AG04449 (cell line): ENCODE measurements at regions of chr15 and their contacts with region 1.

Region 1: GRCh38 chr15:45126535-45127158 is 3.0 kb downstream of the DUOXA1 start:
- DNase-seq: no peak
- H3K4me3 ChIP-seq: no peak overlapping the region
- CTCF ChIP-seq: peak; percentile 34

Region 2: GRCh38 chr15:45112586-45113379 is 13.9 kb before region 1 on chr15:
- CTCF ChIA-PET with region 1: interaction called, 129 read pairs
- POLR2A ChIA-PET with region 1: no interaction called
- DNase-seq: no peak
- H3K4me3 ChIP-seq: no peak overlapping the region
- CTCF ChIP-seq: no peak

Region 3: DNA sequence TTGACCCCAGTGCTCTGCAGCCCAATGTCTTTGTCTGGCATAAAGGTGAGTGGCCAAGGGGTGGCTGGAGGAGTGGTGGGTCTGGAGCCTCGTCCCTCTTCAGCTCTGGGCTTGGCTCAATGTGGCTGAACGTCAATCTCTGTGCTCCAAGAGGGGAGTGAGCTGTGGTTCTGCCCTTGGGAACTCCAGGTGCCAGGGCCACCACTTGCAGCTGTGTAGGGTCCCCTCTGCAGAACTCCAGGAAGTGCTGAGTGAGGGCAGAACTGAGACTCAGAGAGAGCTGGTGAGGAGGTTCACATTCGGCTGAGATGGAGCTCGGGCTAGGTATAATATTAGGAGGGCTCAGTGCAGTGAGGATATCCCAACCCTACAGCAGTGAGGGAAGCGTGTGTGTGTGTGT is 14.7 kb after region 1 on chr15:
- CTCF ChIA-PET with region 1: interaction called, 129 read pairs
- POLR2A ChIA-PET with region 1: no interaction called
- DNase-seq: no peak
- H3K4me3 ChIP-seq: no peak overlapping the region
- CTCF ChIP-seq: no peak

Region 4: DNA sequence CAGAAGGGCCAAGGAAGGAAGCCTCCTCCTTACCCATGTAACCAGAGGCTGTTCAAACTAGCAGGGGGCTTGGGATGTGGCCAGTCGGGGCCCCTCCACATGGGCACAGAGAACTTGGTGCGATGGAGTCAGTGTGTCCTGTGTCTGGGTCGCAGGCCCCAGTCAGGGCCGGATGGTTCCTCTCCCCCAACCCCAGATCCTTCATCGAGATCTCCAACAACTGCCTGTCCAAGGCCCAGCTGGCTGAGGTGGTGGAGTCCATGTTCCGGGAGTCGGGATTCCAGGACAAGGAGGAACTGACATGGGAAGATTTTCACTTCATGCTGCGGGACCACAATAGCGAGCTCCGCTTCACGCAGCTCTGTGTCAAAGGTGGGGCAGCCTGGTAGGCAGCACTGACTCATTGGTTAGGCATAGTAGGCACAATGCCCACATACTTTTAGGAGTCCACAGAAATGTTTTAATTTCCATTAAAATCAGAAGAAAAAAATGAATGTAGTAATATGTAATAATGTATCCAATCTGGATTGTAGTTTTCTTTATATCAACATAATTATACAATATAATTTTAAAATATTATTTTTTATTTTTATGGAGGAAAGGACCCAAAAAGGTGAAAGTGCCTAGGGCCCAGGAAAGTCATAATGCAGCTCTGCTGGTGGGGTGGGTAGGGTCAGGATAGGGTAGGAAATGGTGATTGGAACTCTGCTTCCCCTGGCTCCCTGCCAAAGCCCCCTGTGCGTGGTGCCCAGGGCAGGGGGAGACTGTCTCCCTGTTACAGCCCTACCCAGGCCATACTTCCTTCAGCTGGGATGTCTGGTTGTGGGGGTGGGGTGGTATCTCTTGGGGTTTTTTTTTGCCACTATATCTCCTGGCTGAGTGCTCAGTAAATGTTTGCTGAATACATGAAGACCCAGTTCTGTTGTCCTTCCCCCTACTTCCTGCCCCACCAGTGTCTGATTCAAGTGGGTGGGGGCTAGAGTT is 21.7 kb after region 1 on chr15:
- CTCF ChIA-PET with region 1: interaction called, 11 read pairs
- POLR2A ChIA-PET with region 1: no interaction called
- DNase-seq: no peak
- H3K4me3 ChIP-seq: no peak overlapping the region
- CTCF ChIP-seq: no peak